MCF 10A (cell line): ENCODE measurements at regions of chr3 and their contacts with region 1.

Region 1: GRCh38 chr3:183468424-183468823 is 40.0 kb upstream of the MCF2L2 start:
- DNase-seq: no peak
- H3K4me3 Mint-ChIP-seq: no peak overlapping the region
- H3K27ac Mint-ChIP-seq: no peak overlapping the region
- H3K4me1 Mint-ChIP-seq: no peaks in the 10 kb centered on the region
- H3K27me3 Mint-ChIP-seq: no peaks in the 10 kb centered on the region
- CTCF ChIP-seq: no peak

Region 2: DNA sequence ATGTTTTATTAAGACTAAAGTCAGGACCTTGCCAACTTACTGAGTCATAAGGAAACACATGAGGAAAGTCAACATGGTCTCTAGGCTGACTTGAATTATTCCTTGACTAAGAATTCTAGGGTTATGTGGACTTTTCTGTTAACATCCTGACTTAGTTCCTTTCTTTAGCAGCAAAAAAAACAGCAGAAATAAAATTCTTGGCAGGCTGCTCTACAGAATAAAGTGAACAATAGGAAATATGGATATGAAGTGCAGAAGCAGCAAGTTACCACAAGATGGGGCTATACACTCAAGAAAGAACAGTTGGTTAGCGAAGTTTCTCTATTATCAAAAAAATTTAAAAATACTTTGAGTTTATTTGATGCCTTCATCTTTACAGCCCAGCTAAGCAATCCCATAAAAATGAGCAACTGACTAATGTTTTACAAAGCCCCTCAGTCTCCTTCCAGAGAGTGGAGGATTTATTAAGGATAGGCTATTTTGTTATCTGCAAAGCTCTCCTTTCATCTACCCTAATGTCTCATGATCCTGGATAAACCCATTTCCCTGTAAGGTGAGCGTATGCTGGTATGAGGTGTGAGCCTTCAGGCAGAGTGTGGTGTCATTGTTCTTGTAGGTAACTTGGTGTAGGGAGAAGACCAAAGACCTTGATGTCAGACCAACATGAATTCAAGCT is 346.0 kb before region 1 on chr3:
- CTCF ChIA-PET with region 1: no interaction called
- POLR2A ChIA-PET with region 1: no interaction called
- intact Hi-C with region 1: loop called (anchors 1 kb)
- DNase-seq: peak; percentile 59
- H3K4me3 Mint-ChIP-seq: no peak overlapping the region
- H3K27ac Mint-ChIP-seq: no peak overlapping the region
- H3K4me1 Mint-ChIP-seq: no peaks in the 10 kb centered on the region
- H3K27me3 Mint-ChIP-seq: peaks cover 12% of the 10 kb centered on the region
- CTCF ChIP-seq: peak; percentile 57

Region 3: DNA sequence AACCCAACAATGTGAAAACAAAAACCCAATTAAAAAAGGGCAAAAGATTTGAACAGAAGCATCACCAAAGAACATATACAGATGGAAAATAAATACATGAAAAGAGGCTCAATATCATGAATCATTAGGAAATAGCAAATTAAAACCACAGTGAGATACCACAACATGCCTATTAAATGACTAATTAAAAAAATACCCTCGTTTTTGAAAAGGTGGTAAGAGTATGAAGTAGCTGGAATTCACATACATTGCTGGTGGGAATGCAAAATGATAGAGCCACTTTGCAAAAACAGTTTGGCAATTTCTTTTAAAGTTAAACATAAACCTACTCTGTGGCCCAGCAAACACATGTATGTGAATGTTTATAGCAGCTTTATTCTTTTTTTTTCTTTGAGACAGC is 139.6 kb before region 1 on chr3:
- CTCF ChIA-PET with region 1: no interaction called
- POLR2A ChIA-PET with region 1: no interaction called
- intact Hi-C with region 1: no loop called
- DNase-seq: peak; percentile 46
- H3K4me3 Mint-ChIP-seq: no peak overlapping the region
- H3K27ac Mint-ChIP-seq: peak overlapping the region; percentile 50
- H3K4me1 Mint-ChIP-seq: peaks cover 32% of the 10 kb centered on the region
- H3K27me3 Mint-ChIP-seq: no peaks in the 10 kb centered on the region
- CTCF ChIP-seq: no peak

Region 4: DNA sequence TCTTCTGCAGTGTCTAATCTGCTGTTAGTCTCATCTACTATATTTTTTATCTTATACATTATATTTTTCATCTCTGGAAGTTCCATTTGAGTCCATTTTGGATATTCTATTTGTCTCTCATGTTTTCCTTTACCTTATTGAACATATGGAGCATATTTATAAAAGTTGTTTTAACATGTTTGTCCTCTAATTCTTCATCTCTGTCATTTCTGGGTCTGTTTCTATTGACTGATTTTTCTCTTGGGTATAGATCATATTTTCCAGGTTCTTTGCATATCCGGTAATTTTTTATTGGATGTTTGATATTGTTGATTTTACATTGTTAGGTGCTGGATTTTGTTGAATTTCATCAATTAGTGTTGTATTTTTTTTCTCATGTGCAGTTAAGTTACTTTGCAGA is 129.5 kb after region 1 on chr3:
- CTCF ChIA-PET with region 1: no interaction called
- POLR2A ChIA-PET with region 1: no interaction called
- intact Hi-C with region 1: no loop called
- DNase-seq: no peak
- H3K4me3 Mint-ChIP-seq: no peak overlapping the region
- H3K27ac Mint-ChIP-seq: no peak overlapping the region
- H3K4me1 Mint-ChIP-seq: no peaks in the 10 kb centered on the region
- H3K27me3 Mint-ChIP-seq: no peaks in the 10 kb centered on the region
- CTCF ChIP-seq: no peak